ENCODE measurements at regions of chr3 and their contacts with region 1.

Region 1: DNA sequence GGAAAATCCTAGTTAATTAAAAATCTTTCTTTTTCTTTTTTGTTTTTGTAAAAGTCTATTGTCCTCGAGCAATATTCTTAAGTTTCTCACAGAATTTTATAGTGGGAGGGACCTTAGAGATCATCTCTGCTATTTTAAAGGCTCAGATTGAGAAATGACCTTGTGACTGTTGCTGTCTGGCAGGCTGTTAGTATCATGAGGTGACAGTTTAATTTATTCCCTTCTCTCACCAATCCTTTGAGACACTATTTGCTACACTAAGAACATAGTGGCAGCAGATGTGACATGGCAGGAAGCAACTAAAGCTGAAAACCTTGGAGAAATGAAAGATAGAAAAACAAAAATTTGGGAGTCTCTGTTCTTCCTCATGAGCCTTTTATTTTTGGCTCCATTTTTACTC is 24.9 kb downstream of the APPL1 start:
- DNase-seq: no peak
- ATAC-seq: no peak
- H3K4me3 ChIP-seq: no peak overlapping the region
- H3K27ac ChIP-seq: no peak overlapping the region
- H3K4me1 ChIP-seq: no peaks in the 10 kb centered on the region
- H3K27me3 ChIP-seq: no peaks in the 10 kb centered on the region
- CTCF ChIP-seq: no peak
- POLR2A ChIP-seq: no peak
- RAD21 ChIP-seq: no peak

Region 2: DNA sequence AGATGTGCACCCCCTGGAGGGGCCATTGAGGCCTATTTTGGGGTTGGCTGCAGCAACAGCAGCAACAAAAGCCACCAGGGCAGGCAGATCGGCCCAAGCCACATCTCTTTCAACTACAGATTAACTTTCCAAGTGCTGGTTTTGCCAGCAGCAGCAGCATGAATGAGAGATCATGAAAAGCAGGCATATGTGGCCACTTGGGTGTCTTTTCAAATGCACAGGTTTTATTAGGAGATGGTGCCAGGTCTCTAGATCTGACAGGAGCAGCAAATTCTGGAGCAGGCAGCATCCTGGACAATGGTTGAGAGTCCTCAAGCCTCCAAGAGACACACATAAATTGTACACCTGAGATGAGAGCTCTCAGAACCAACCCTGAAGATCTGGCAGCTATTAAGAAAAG is 727.1 kb before region 1 on chr3:
- CTCF ChIA-PET with region 1: no interaction called
- POLR2A ChIA-PET with region 1: no interaction called
- dilution Hi-C with region 1: no loop called
- in situ Hi-C with region 1: no loop called
- intact Hi-C with region 1: no loop called
- DNase-seq: no peak
- ATAC-seq: no peak
- H3K4me3 ChIP-seq: no peak overlapping the region
- H3K27ac ChIP-seq: no peak overlapping the region
- H3K4me1 ChIP-seq: no peaks in the 10 kb centered on the region
- H3K27me3 ChIP-seq: no peaks in the 10 kb centered on the region; the same call in 1 of the 2 replicates
- CTCF ChIP-seq: no peak
- POLR2A ChIP-seq: no peak
- RAD21 ChIP-seq: no peak

Region 3: GRCh38 chr3:57234613-57235575 is 17.5 kb before region 1 on chr3:
- CTCF ChIA-PET with region 1: no interaction called
- POLR2A ChIA-PET with region 1: interaction called, 47 read pairs
- dilution Hi-C with region 1: no loop called
- in situ Hi-C with region 1: no loop called
- intact Hi-C with region 1: no loop called
- DNase-seq: no peak
- ATAC-seq: no peak
- H3K4me3 ChIP-seq: no peak overlapping the region
- H3K27ac ChIP-seq: no peak overlapping the region
- H3K4me1 ChIP-seq: no peaks in the 10 kb centered on the region
- H3K27me3 ChIP-seq: no peaks in the 10 kb centered on the region
- CTCF ChIP-seq: no peak
- POLR2A ChIP-seq: no peak
- RAD21 ChIP-seq: no peak

Region 4: GRCh38 chr3:57555306-57555705 is 302.9 kb after region 1 on chr3:
- CTCF ChIA-PET with region 1: no interaction called
- POLR2A ChIA-PET with region 1: no interaction called
- dilution Hi-C with region 1: no loop called
- in situ Hi-C with region 1: no loop called
- intact Hi-C with region 1: no loop called
- DNase-seq: no peak
- ATAC-seq: no peak
- H3K4me3 ChIP-seq: peak overlapping the region; percentile 79
- H3K27ac ChIP-seq: peak overlapping the region; percentile 73
- H3K4me1 ChIP-seq: peaks cover 1% of the 10 kb centered on the region; the same call in 1 of the 2 replicates
- H3K27me3 ChIP-seq: no peaks in the 10 kb centered on the region
- CTCF ChIP-seq: no peak
- POLR2A ChIP-seq: no peak
- RAD21 ChIP-seq: no peak